MCF 10A (cell line): ENCODE measurements at regions of chr11 and their contacts with region 1.

Region 1: DNA sequence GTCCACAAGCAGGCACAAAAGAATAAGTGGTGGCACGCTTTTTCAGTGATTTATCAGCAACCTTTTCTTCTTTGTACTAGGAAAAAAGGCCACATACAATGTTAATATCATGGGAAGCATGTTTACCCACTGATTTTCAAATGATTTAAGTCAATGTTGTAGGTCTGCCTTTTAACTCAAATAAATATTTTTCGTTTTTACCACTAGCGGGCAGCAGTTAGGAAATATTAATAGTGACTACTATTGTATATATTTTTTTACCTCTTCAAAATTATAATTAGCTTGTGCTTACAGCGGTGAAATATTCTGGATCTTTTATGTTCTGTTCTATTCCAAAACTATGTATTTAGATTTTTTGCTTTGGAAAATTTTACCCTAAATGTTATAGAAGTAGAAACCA is 6.4 kb upstream of the SLC17A6 start:
- DNase-seq: no peak
- H3K4me3 Mint-ChIP-seq: no peak overlapping the region
- H3K27ac Mint-ChIP-seq: no peak overlapping the region
- H3K4me1 Mint-ChIP-seq: no peaks in the 10 kb centered on the region
- H3K27me3 Mint-ChIP-seq: peaks cover 49% of the 10 kb centered on the region
- CTCF ChIP-seq: no peak

Region 2: DNA sequence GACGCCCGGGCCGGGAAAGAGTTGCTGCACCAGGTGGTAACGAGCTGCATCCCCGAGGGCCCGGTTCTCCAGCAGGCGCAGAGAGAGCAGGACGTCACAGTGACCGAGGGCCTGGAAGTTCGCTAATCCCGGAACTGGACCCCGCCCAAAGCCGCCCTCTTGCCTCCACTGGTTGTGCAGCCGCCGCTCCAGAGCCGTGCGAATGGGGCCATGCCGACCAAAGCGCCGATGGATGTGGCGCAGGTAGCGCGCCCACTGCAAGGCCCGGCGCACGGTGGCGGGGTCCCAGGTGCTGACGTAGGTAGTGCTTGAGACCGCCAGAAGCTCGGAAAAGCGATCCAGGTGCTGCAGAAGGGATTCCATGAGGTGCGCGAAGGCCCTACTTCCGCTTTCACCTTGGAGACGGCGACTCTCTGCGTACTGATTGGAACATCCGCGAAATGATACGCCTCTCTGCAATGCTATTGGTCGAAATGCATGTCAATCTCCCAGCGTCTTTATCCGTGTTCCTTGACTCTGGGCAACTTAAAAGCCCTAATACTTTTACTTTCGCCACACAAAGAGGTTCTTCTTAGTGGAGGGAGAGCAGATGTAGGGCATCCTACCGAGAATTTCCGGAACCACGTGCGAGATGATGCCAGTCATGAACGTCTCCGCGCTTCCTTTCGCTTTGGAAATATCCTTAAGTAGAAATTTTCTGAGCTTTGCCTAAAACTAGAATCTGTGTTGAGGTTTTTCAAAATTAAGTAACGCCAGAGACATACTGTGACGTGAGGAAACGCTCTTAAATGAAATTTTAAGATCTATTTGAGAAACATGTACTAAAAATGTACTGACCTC is 293.9 kb after region 1 on chr11 and contains the start of gene FANCF:
- CTCF ChIA-PET with region 1: no interaction called
- POLR2A ChIA-PET with region 1: no interaction called
- intact Hi-C with region 1: loop called (anchors 2 kb)
- DNase-seq: peak; percentile 99
- H3K4me3 Mint-ChIP-seq: peak within 1 kb of the TSS; percentile 98
- H3K27ac Mint-ChIP-seq: peak within 1 kb of the TSS; percentile 95
- H3K4me1 Mint-ChIP-seq: peaks cover 18% of the 10 kb centered on the region
- H3K27me3 Mint-ChIP-seq: no peaks in the 10 kb centered on the region
- CTCF ChIP-seq: peak; percentile 2
- total RNA-seq, gene FANCF: 10.7 and 13.6 TPM in 2 replicates